Activated CD4-positive, alpha-beta T cell treated with anti-CD3 and anti-CD28 coated beads, Interleukin-2, amount 10 ng/mL, durations not matched to agents 24 days and 14 days (primary cell): ENCODE measurements at regions of chr5 and their contacts with region 1.

Region 1: DNA sequence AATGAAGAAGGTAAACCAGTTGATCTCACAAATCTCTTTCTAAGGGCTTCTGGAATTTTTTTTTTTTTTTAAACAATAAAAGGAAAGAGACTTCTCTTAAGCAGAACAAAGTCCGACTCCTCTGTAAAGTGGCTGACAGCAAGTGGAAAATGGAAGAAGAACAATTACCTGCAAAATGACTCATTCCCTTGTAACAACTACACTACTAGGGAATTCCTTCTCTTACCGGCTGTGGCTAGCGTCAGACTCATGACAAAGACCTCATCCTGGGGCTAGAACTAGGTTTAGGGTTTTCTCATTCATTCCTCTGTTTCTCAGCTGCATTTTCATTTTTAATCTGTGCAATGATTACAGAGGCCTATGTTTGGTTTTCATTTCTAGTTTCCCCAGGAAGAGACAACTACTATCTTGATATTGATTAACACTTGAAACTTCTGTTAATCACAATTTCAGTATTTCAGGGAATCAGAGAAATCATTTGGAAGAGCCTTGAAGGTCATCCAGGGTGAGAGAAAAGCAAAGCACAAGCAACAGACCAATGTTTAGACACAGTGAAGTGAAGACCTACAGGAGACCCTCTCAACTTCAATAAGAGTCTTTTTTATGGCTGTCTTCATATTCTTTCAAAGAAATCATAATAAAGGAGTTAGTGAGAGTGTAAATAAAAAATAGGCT is 437.9 kb downstream of the RAB3C start:
- DNase-seq: peak; percentile 66
- H3K4me3 Mint-ChIP-seq: peak overlapping the region; percentile 67
- H3K27ac Mint-ChIP-seq: peak overlapping the region; percentile 93
- H3K4me1 Mint-ChIP-seq: peaks cover 64% of the 10 kb centered on the region
- H3K27me3 Mint-ChIP-seq: no peaks in the 10 kb centered on the region

Region 2: DNA sequence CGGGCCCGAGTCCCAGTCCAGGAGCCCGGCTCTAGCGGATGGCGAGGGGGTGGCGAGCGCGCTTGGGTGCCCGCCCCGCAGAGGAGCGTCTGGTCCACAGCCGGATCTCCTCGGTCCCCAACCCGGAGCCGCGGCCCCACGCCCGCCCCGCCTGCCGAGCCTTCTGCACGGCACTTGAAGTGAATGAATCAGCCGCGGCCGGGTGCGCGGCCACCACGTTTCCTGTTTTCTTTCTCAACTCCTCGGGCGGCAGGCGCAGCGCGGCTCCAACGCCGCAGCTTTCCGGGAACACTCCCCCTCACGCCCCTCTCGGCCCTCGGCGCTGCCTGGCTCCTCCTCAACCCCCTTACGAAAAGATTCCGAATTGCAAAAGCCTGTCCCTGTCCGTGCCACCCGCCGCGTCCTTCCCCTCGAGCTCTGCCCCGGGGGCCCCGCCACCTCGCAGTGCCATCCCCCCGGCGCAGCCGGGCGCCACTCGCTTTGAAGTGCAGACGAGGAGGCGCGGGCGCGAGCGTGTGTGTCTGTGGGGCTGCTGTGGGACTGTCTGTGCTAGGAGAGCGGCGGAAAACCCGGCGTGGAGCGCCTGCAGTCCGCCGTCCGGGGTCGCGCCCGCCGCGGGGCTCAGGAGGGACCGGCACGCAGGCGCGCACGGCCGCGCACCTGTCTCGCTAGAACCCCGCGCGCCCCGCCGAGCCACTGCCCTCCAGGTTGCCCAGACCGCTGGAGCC is 18.7 kb after region 1 on chr5:
- intact Hi-C with region 1: loop called (anchors 1 kb)
- DNase-seq: peak; percentile 97
- H3K4me3 Mint-ChIP-seq: peak overlapping the region; percentile 92
- H3K27ac Mint-ChIP-seq: peak overlapping the region; percentile 99
- H3K4me1 Mint-ChIP-seq: peaks cover 48% of the 10 kb centered on the region
- H3K27me3 Mint-ChIP-seq: no peaks in the 10 kb centered on the region

Region 3: GRCh38 chr5:59218424-59219045 is 197.8 kb after region 1 on chr5:
- intact Hi-C with region 1: no loop called
- DNase-seq: no peak
- H3K4me3 Mint-ChIP-seq: no peak overlapping the region
- H3K27ac Mint-ChIP-seq: no peak overlapping the region
- H3K4me1 Mint-ChIP-seq: no peaks in the 10 kb centered on the region
- H3K27me3 Mint-ChIP-seq: peaks cover 28% of the 10 kb centered on the region